ENCODE measurements at regions of chr22 and their contacts with region 1.

Region 1: DNA sequence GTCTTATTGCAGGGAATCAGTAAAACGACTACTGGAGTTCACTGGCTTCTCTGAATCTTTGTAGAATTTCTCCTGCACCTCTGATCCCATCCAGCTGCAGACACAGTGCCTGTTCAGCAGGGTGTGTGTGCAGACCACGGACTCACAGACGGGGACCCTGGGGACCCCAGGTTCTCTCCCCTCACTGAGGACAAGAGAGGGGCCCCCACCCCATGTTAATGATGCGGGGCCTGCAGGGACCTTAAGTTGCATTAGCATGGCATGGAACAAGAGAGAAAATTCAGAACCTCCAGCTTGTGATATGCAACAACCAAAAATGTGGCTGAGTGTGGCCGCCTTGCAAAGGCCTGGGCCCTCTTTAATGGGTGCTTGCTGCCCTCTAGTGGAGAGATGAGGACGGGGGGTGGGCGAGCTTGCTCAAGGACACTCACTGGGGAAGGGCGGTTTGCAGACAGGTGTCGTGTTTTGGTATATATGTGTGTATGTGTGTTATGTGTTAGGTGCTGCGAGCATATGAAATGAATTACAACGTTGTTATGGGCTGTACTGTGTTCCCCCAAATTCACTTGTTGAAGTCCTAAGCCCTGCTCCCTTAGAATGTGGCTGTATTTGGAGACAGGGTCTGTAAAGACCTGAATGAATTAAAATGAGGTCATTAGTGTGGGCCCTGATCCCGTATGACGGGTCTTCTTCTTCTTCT is 84.4 kb upstream of the SEPTIN5 start:
- DNase-seq: peak; percentile 70 to 90 (median 82)
- ATAC-seq: peak; percentile 89 to 99 (median 95)
- H3K4me3 ChIP-seq: no peak overlapping the region
- H3K4me3 Mint-ChIP-seq: no peak overlapping the region
- H3K27ac ChIP-seq: no peak overlapping the region
- H3K27ac Mint-ChIP-seq: no peak overlapping the region
- H3K4me1 ChIP-seq: peaks cover 0 to 6% of the 10 kb centered on the region in 2 experiments
- H3K4me1 Mint-ChIP-seq: peaks cover 4 to 10% (median 5%) of the 10 kb centered on the region in 3 donors
- H3K27me3 ChIP-seq: peaks cover 0 to 19% of the 10 kb centered on the region in 2 experiments
- H3K27me3 Mint-ChIP-seq: peaks cover 3 to 17% of the 10 kb centered on the region in 2 donors

Region 2: GRCh38 chr22:19143967-19144400 is 485.9 kb before region 1 on chr22:
- CTCF ChIA-PET with region 1: interaction called in 1 of 2 experiments, 25 read pairs
- POLR2A ChIA-PET with region 1: no interaction called
- DNase-seq: peak in 28 of 35 experiments; percentile 16 to 56 (median 32)
- ATAC-seq: peak in 2 of 4 experiments; percentile 3 to 15
- H3K4me3 ChIP-seq: peak overlapping the region; percentile 73 to 91
- H3K4me3 Mint-ChIP-seq: peak overlapping the region; percentile 98 to 100 (median 99)
- H3K27ac ChIP-seq: peak overlapping the region; percentile 82
- H3K27ac Mint-ChIP-seq: peak overlapping the region; percentile 95
- H3K4me1 ChIP-seq: peaks cover 3 to 18% of the 10 kb centered on the region in 2 experiments
- H3K4me1 Mint-ChIP-seq: peaks cover 16 to 28% (median 23%) of the 10 kb centered on the region in 3 donors
- H3K27me3 ChIP-seq: peaks cover 2 to 18% of the 10 kb centered on the region in 2 experiments
- H3K27me3 Mint-ChIP-seq: peaks cover 0 to 20% of the 10 kb centered on the region in 2 donors

Region 3: GRCh38 chr22:19495562-19496323 is 134.1 kb before region 1 on chr22:
- CTCF ChIA-PET with region 1: interaction called, 5 to 10 read pairs
- POLR2A ChIA-PET with region 1: no interaction called
- DNase-seq: peak in 2 of 35 experiments; percentile 16 to 60
- ATAC-seq: peak; percentile 50 to 73 (median 62)
- H3K4me3 ChIP-seq: no peak overlapping the region
- H3K4me3 Mint-ChIP-seq: no peak overlapping the region
- H3K27ac ChIP-seq: no peak overlapping the region
- H3K27ac Mint-ChIP-seq: peak overlapping the region; percentile 52 to 86
- H3K4me1 ChIP-seq: peaks cover 0 to 6% of the 10 kb centered on the region in 2 experiments
- H3K4me1 Mint-ChIP-seq: peaks cover 7 to 11% (median 7%) of the 10 kb centered on the region in 3 donors
- H3K27me3 ChIP-seq: peaks cover 0 to 2% of the 10 kb centered on the region in 2 experiments
- H3K27me3 Mint-ChIP-seq: no peaks in the 10 kb centered on the region

Region 4: DNA sequence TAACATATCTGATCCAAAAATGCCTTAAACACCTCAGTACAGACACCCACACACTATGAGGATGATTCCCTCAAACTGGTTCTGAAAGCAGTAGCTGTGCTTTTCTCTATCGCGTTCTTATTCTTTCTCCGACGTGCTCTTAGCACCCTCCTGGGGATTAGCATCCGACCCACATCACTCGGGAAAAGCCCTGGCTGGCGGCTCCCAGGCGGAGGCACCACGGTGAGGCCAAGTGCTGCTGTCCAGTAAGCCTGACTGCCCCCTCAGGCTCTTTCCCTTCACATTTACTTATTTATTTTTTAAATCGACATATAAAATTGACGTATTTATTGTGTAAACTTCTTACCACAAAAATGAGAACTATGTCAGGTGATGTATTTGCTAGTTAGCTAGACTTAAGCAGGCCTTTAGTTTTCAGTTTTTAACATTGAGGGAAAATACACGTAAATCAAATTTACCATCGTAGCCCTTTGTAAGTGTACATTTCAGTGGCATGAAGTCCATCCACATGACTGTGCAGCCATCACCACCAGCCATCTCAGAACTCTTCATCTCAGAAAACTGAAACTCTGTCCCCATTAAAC is 149.9 kb after region 1 on chr22:
- CTCF ChIA-PET with region 1: no interaction called
- POLR2A ChIA-PET with region 1: no interaction called
- DNase-seq: no peak
- ATAC-seq: no peak
- H3K4me3 ChIP-seq: no peak overlapping the region
- H3K4me3 Mint-ChIP-seq: no peak overlapping the region
- H3K27ac ChIP-seq: no peak overlapping the region
- H3K27ac Mint-ChIP-seq: no peak overlapping the region
- H3K4me1 ChIP-seq: peaks cover 2 to 7% of the 10 kb centered on the region in 2 experiments
- H3K4me1 Mint-ChIP-seq: peaks cover 10 to 18% (median 17%) of the 10 kb centered on the region in 3 donors
- H3K27me3 ChIP-seq: peaks cover 0 to 49% of the 10 kb centered on the region in 2 experiments
- H3K27me3 Mint-ChIP-seq: peaks cover 6 to 36% of the 10 kb centered on the region in 2 donors

Region 5: GRCh38 chr22:19962233-19962908 is 332.5 kb after region 1 on chr22:
- CTCF ChIA-PET with region 1: no interaction called
- POLR2A ChIA-PET with region 1: no interaction called
- DNase-seq: peak in 33 of 35 experiments; percentile 34 to 86 (median 56)
- ATAC-seq: peak; percentile 67 to 83 (median 76)
- H3K4me3 ChIP-seq: no peak overlapping the region
- H3K4me3 Mint-ChIP-seq: no peak overlapping the region
- H3K27ac ChIP-seq: no peak overlapping the region
- H3K27ac Mint-ChIP-seq: no peak overlapping the region
- H3K4me1 ChIP-seq: peaks cover 4 to 14% of the 10 kb centered on the region in 2 experiments
- H3K4me1 Mint-ChIP-seq: peaks cover 0 to 6% (median 2%) of the 10 kb centered on the region in 3 donors
- H3K27me3 ChIP-seq: no peaks in the 10 kb centered on the region
- H3K27me3 Mint-ChIP-seq: no peaks in the 10 kb centered on the region

Measured in T-cell (primary cell).